CD8-positive, alpha-beta T cell (primary cell): ENCODE measurements at regions of chr5 and their contacts with region 1.

Region 1: GRCh38 chr5:39547553-39548154 is 122.9 kb upstream of the DAB2 start:
- DNase-seq: peak in 3 of 9 experiments; percentile 11 to 64 (median 45)
- ATAC-seq: peak; percentile 46
- H3K4me3 ChIP-seq: no peak overlapping the region
- H3K4me3 Mint-ChIP-seq: peak overlapping the region; percentile 43
- H3K27ac ChIP-seq: no peak overlapping the region
- H3K27ac Mint-ChIP-seq: no peak overlapping the region
- H3K4me1 ChIP-seq: no peaks in the 10 kb centered on the region
- H3K4me1 Mint-ChIP-seq: peaks cover 6% of the 10 kb centered on the region
- H3K27me3 ChIP-seq: no peaks in the 10 kb centered on the region
- H3K27me3 Mint-ChIP-seq: no peaks in the 10 kb centered on the region
- CTCF ChIP-seq: peak; percentile 72

Region 2: DNA sequence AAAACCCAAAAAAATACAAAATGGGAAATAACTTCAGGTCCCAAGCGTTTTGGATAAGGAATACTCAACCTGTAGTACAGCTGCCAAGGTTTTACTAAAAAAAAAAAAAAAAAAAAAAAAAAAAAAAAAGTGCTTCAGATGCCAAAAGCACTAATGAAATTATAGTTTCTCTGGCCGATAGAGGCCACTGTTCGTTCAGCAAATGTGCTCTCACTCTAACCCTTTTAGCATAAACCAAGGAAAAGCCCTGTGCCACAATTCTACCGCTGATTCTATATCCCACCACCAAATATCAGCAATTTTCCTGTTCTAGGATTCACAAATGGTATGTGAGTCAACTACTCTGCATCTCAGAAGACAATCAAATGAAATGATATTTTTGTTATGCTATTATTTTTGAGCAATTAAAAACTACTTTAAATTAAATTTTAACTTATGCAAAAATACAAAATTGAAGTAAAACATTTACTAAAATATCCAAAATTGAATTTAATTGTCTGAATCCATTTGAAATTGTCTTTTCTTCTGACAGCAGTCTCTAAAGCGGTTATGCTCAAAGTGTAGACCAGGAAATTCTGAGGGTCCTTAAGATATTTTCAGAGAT is 553.2 kb before region 1 on chr5:
- CTCF ChIA-PET with region 1: interaction called, 3 read pairs
- POLR2A ChIA-PET with region 1: no interaction called
- intact Hi-C with region 1: loop called in 1 of 2 experiments (anchors 5 kb)
- DNase-seq: peak in 5 of 9 experiments; percentile 15 to 76 (median 41)
- ATAC-seq: peak; percentile 74
- H3K4me3 ChIP-seq: no peak overlapping the region
- H3K4me3 Mint-ChIP-seq: no peak overlapping the region
- H3K27ac ChIP-seq: no peak overlapping the region
- H3K27ac Mint-ChIP-seq: no peak overlapping the region
- H3K4me1 ChIP-seq: no peaks in the 10 kb centered on the region
- H3K4me1 Mint-ChIP-seq: peaks cover 27% of the 10 kb centered on the region
- H3K27me3 ChIP-seq: no peaks in the 10 kb centered on the region
- H3K27me3 Mint-ChIP-seq: no peaks in the 10 kb centered on the region
- CTCF ChIP-seq: peak; percentile 39

Region 3: DNA sequence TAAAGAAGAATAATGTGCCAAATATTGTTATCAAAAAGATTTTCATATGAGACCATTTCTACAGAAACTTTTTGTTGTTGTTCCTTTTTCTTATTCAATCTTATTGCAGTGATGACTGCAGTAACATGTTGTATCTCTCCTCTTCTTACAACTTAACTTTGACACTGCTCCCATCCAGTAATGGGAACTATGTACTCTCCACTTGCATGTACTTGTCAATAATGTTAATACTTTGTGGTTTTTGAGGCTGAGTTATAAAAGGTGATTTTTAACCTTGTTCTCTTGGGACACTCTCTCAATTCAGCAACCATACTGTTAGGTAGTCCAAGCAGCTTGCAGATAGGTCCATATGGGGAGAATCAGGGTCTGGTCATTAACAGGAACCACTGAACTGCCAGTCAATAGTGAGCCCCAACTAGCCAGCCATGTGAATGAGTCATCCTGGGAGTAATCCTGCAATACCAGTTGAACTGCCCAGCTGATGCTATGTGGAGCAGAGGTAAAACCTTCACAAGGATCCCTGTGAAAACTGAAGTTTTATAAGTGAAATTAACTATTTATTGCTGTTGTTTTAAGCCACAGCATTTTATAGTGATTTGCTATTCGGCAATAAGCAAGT is 76.7 kb after region 1 on chr5:
- CTCF ChIA-PET with region 1: no interaction called
- POLR2A ChIA-PET with region 1: no interaction called
- intact Hi-C with region 1: no loop called
- DNase-seq: no peak
- ATAC-seq: no peak
- H3K4me3 ChIP-seq: no peak overlapping the region
- H3K4me3 Mint-ChIP-seq: no peak overlapping the region
- H3K27ac ChIP-seq: no peak overlapping the region
- H3K27ac Mint-ChIP-seq: no peak overlapping the region
- H3K4me1 ChIP-seq: no peaks in the 10 kb centered on the region
- H3K4me1 Mint-ChIP-seq: no peaks in the 10 kb centered on the region
- H3K27me3 ChIP-seq: no peaks in the 10 kb centered on the region
- H3K27me3 Mint-ChIP-seq: peaks cover 27% of the 10 kb centered on the region
- CTCF ChIP-seq: no peak